ENCODE measurements at regions of chr1 and their contacts with region 1.

Region 1: GRCh38 chr1:114107474-114108435 is 45.9 kb downstream of the SYT6 start:
- DNase-seq: no peak
- H3K4me3 ChIP-seq: no peak overlapping the region
- H3K27ac ChIP-seq: no peak overlapping the region
- H3K4me1 ChIP-seq: no peaks in the 10 kb centered on the region
- H3K27me3 ChIP-seq: no peaks in the 10 kb centered on the region
- CTCF ChIP-seq: no peak
- POLR2A ChIP-seq: no peak

Region 2: DNA sequence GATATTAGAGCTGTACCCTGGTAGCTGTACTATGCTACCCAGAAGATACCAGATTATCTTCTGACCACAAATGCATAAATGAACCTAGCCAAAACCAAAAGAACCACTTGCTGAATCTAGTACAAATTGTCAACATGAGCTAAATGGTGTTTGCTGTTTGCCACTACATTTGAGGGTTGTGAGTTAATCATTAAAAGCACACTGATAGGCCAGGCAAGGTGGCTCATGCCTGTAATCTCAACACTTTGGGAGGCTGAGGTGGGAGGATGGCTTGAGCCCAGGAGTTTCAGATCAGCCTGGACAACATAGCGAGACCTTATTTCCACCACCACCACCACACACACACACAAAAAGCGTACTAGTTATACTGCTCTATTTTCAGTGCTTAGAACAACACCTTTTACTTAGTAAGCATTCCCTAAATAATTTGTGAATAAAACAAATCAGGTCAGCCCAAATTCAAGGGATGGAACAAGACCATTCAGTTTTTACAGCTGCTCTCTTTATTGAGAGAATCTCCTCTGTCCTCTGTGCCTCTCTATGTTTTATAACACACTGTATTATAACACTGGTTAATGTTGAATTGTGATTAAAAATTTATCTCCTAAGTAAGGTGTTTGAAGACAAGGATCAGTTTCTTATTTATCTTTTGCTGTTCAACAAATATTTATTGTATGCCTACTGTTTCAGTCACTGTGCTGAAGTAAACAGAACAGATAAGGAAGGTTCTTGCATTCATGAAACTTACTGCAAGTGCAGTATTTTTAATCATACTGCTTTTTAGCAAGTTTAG is 673.5 kb before region 1 on chr1:
- intact Hi-C with region 1: no loop called
- DNase-seq: no peak
- H3K4me3 ChIP-seq: no peak overlapping the region
- H3K27ac ChIP-seq: no peak overlapping the region
- H3K4me1 ChIP-seq: peaks cover 25% of the 10 kb centered on the region
- H3K27me3 ChIP-seq: no peaks in the 10 kb centered on the region
- CTCF ChIP-seq: no peak
- POLR2A ChIP-seq: no peak

Region 3: GRCh38 chr1:114145504-114146151 is 37.9 kb after region 1 on chr1:
- intact Hi-C with region 1: loop called (anchors 2 kb)
- DNase-seq: no peak
- H3K4me3 ChIP-seq: no peak overlapping the region
- H3K27ac ChIP-seq: no peak overlapping the region
- H3K4me1 ChIP-seq: no peaks in the 10 kb centered on the region
- H3K27me3 ChIP-seq: no peaks in the 10 kb centered on the region
- CTCF ChIP-seq: no peak
- POLR2A ChIP-seq: no peak